Heart left ventricle (tissue), 16 donors: ENCODE measurements at regions of chr15 and their contacts with region 1.

Region 1: DNA sequence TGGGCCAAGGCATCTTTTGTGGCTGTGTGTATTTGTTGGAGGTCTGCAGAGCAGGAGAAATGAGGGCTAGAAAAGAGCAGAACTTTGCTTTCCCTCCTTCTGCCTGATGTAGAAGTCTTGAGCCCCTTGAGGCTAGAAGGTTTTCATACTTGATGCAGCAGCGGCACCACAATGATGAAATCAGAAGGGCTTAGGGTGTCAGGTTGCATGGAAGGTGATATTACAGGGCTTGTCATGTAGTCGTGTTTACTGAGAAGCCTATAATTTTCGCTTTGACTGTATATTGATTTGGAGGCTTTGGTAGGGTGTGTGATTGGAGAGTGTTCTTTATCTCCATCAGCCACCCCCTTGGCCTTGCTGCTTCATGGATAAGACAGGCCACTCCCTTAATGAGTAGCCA is 339.8 kb downstream of the THSD4 start:
- DNase-seq: no peak
- ATAC-seq: no peak
- H3K4me3 ChIP-seq: no peak overlapping the region
- H3K27ac ChIP-seq: peak overlapping the region in 1 of 12 donors; percentile 2
- H3K4me1 ChIP-seq: peaks cover 0 to 46% (median 18%) of the 10 kb centered on the region in 12 donors
- H3K27me3 ChIP-seq: no peaks in the 10 kb centered on the region
- CTCF ChIP-seq: no peak
- POLR2A ChIP-seq: no peak

Region 2: GRCh38 chr15:71386448-71387236 is 68.5 kb before region 1 on chr15:
- intact Hi-C with region 1: no loop called
- DNase-seq: no peak
- ATAC-seq: peak in 2 of 4 donors; percentile 44 to 53
- H3K4me3 ChIP-seq: no peak overlapping the region
- H3K27ac ChIP-seq: peak overlapping the region in 3 of 12 donors; percentile 5 to 33 (median 9)
- H3K4me1 ChIP-seq: peaks cover 0 to 51% (median 14%) of the 10 kb centered on the region in 12 donors
- H3K27me3 ChIP-seq: no peaks in the 10 kb centered on the region
- CTCF ChIP-seq: peak; percentile 5 to 66 (median 41)
- POLR2A ChIP-seq: no peak

Region 3: GRCh38 chr15:71494563-71495397 is 39.7 kb after region 1 on chr15:
- intact Hi-C with region 1: loop called in 1 of 10 experiments (anchors 5 kb)
- DNase-seq: no peak
- ATAC-seq: no peak
- H3K4me3 ChIP-seq: no peak overlapping the region
- H3K27ac ChIP-seq: peak overlapping the region in 11 of 12 donors; percentile 11 to 76 (median 63)
- H3K4me1 ChIP-seq: peaks cover 0 to 51% (median 12%) of the 10 kb centered on the region in 12 donors
- H3K27me3 ChIP-seq: no peaks in the 10 kb centered on the region
- CTCF ChIP-seq: no peak
- POLR2A ChIP-seq: no peak

Region 4: GRCh38 chr15:71506946-71507345 is 51.8 kb after region 1 on chr15:
- intact Hi-C with region 1: no loop called
- DNase-seq: no peak
- ATAC-seq: no peak
- H3K4me3 ChIP-seq: no peak overlapping the region
- H3K27ac ChIP-seq: no peak overlapping the region
- H3K4me1 ChIP-seq: peaks cover 0 to 33% (median 4%) of the 10 kb centered on the region in 12 donors
- H3K27me3 ChIP-seq: no peaks in the 10 kb centered on the region
- CTCF ChIP-seq: no peak
- POLR2A ChIP-seq: no peak

Region 5: DNA sequence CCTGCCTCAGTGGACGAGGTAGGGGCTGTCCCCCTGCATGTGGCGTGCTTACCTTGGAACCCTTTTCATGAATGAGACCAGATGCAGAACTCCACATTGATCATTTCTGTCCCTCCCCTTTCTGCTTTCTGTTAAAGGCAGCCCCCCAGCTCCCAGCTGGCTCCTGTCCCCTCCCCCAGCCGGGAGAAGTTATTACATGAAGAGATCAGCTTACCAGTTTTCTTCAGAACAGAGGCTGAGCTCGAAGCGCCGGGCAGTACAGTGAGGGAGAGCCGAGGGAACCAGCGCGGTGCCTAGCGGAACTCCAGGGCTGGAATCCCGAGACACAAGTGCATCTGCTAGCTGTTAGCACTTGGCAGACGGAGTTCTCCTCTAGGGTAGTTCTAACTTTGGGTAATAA is 91.9 kb after region 1 on chr15:
- intact Hi-C with region 1: loop called in 1 of 10 experiments (anchors 10 kb)
- DNase-seq: peak; percentile 32 to 70 (median 58)
- ATAC-seq: peak; percentile 49 to 77 (median 70)
- H3K4me3 ChIP-seq: peak overlapping the region in 3 of 12 donors; percentile 16 to 26 (median 25)
- H3K27ac ChIP-seq: peak overlapping the region in 8 of 12 donors; percentile 11 to 79 (median 50)
- H3K4me1 ChIP-seq: peaks cover 0 to 41% (median 9%) of the 10 kb centered on the region in 12 donors
- H3K27me3 ChIP-seq: no peaks in the 10 kb centered on the region
- CTCF ChIP-seq: no peak
- POLR2A ChIP-seq: no peak

Region 6: DNA sequence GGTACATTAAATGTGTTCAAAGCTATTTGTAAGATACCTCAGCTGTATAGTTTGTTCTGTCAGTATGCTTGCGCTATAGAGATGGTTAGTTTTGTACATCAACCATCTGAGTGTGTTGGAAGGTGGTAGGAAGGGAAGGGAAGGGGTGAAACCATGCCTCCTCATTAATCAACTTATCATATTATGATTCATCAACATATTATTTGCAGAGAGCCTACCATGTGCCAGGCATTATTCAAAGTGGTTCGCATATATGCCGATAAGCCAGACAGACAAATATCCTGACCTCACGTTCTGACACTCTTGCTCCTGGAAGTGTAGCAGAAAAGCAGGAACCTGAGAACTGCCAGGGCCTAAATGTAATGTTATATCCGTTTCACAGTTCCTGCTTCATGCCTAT is 107.1 kb after region 1 on chr15:
- intact Hi-C with region 1: loop called in 2 of 10 experiments (anchors 10 kb)
- DNase-seq: no peak
- ATAC-seq: no peak
- H3K4me3 ChIP-seq: no peak overlapping the region
- H3K27ac ChIP-seq: no peak overlapping the region
- H3K4me1 ChIP-seq: peaks cover 0 to 20% (median 6%) of the 10 kb centered on the region in 12 donors
- H3K27me3 ChIP-seq: no peaks in the 10 kb centered on the region
- CTCF ChIP-seq: no peak
- POLR2A ChIP-seq: no peak

Region 7: GRCh38 chr15:71575474-71576045 is 120.5 kb after region 1 on chr15:
- intact Hi-C with region 1: loop called in 2 of 10 experiments (anchors 5 to 10 kb)
- DNase-seq: no peak
- ATAC-seq: no peak
- H3K4me3 ChIP-seq: no peak overlapping the region
- H3K27ac ChIP-seq: no peak overlapping the region
- H3K4me1 ChIP-seq: peaks cover 0 to 19% (median 0%) of the 10 kb centered on the region in 12 donors
- H3K27me3 ChIP-seq: no peaks in the 10 kb centered on the region
- CTCF ChIP-seq: peak; percentile 28 to 60 (median 47)
- POLR2A ChIP-seq: no peak

Region 8: DNA sequence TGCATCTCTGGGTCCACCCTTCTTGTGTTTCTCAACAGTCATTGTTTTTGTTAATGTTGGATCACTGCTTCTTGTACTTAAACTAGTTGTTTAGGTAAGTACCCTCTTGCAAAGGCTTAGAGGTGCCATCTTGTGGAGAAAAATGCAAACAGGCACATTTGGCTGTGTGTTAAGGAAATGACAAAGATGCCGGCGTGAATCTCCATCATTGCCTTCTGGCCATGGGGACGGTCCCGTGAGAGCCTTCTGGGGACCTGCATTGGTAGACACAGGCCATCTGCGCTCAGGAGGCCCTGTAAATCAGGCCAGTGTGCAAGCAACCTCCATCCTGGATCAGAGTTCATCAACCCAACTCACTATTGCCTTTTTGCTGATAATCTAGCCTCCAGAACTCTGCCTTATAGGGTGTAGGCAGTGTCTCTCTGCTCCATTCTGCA is 196.7 kb after region 1 on chr15:
- intact Hi-C with region 1: loop called in 3 of 10 experiments (anchors 5 to 10 kb)
- DNase-seq: no peak
- ATAC-seq: peak in 1 of 4 donors; percentile 47
- H3K4me3 ChIP-seq: no peak overlapping the region
- H3K27ac ChIP-seq: peak overlapping the region in 1 of 12 donors; percentile 10
- H3K4me1 ChIP-seq: peaks cover 0 to 47% (median 13%) of the 10 kb centered on the region in 12 donors
- H3K27me3 ChIP-seq: no peaks in the 10 kb centered on the region
- CTCF ChIP-seq: peak in 10 of 12 donors; percentile 24 to 54 (median 41)
- POLR2A ChIP-seq: no peak